Transverse colon (tissue), 4 donors: ENCODE measurements at regions of chr1 and their contacts with region 1.

Region 1: GRCh38 chr1:229625915-229626831 is at the starts of genes TAF5L and URB2:
- DNase-seq: peak; percentile 90
- H3K4me3 ChIP-seq: peak within 1 kb of the TSS; percentile 74 to 99 (median 88)
- H3K27ac ChIP-seq: peak within 1 kb of the TSS; percentile 89 to 96 (median 94)
- H3K4me1 ChIP-seq: peaks cover 14 to 32% (median 18%) of the 10 kb centered on the region in 4 donors
- H3K27me3 ChIP-seq: no peaks in the 10 kb centered on the region
- CTCF ChIP-seq: no peak
- EP300 ChIP-seq: no peak
- POLR2A ChIP-seq: peak; percentile 50
- total RNA-seq, gene TAF5L: 10.7 to 22.1 (median 15.4) TPM
- total RNA-seq, gene URB2: 2.6 to 6.5 (median 3.2) TPM

Region 2: GRCh38 chr1:229558571-229559335 is 67.4 kb before region 1 on chr1 and contains the start of gene ABCB10:
- in situ Hi-C with region 1: loop called in 2 of 4 experiments (anchors 10 kb)
- intact Hi-C with region 1: loop called (anchors 5 kb)
- DNase-seq: peak; percentile 96
- H3K4me3 ChIP-seq: peak within 1 kb of the TSS; percentile 71 to 96 (median 86)
- H3K27ac ChIP-seq: peak within 1 kb of the TSS; percentile 93 to 99 (median 98)
- H3K4me1 ChIP-seq: peaks cover 10 to 34% (median 23%) of the 10 kb centered on the region in 4 donors
- H3K27me3 ChIP-seq: no peaks in the 10 kb centered on the region
- CTCF ChIP-seq: peak; percentile 63 to 89 (median 71)
- EP300 ChIP-seq: no peak
- POLR2A ChIP-seq: peak; percentile 56
- total RNA-seq, gene ABCB10: 4.5 to 22.5 (median 18.9) TPM

Region 3: DNA sequence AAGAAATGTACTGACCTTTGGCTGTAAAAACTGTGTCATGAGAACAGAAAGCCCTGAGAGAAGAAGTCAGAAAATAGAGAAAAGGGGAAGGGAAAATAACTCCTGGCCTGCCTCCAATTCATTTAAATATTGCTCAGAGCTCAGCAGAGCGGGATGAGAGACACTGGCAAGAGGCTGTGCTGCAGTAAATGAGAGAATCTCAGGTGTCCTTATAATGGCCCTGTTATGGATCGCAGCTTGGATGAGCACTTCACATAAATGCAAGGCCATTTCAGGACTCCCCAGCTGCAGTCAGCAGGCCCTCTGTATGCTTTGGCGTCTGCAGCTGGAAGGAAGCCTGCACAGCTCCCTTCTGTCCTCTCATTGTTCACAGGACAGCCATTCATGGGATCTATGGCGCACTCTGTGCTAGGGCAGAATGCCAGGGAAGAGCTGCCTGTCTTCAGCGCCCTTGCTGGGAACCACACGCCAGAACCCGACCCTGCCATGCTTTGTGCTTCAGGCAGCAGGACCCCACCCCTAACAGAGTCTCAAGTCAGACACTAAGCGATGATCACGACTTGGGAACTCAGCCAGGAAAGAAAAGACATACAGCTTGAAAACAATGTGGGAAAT is 47.0 kb before region 1 on chr1:
- in situ Hi-C with region 1: loop called in 1 of 4 experiments (anchors 10 kb)
- intact Hi-C with region 1: no loop called
- DNase-seq: no peak
- H3K4me3 ChIP-seq: peak overlapping the region in 3 of 4 donors; percentile 2 to 12 (median 3)
- H3K27ac ChIP-seq: peak overlapping the region; percentile 28 to 65 (median 52)
- H3K4me1 ChIP-seq: peaks cover 11 to 20% (median 16%) of the 10 kb centered on the region in 4 donors
- H3K27me3 ChIP-seq: no peaks in the 10 kb centered on the region
- CTCF ChIP-seq: no peak
- EP300 ChIP-seq: no peak
- POLR2A ChIP-seq: no peak

Region 4: GRCh38 chr1:230066466-230067404 is 440.6 kb after region 1 on chr1 and contains the start of gene GALNT2:
- in situ Hi-C with region 1: no loop called
- intact Hi-C with region 1: no loop called
- DNase-seq: peak; percentile 93
- H3K4me3 ChIP-seq: peak within 1 kb of the TSS; percentile 71 to 96 (median 88)
- H3K27ac ChIP-seq: peak within 1 kb of the TSS; percentile 92 to 96 (median 96)
- H3K4me1 ChIP-seq: peaks cover 0 to 29% (median 18%) of the 10 kb centered on the region in 4 donors
- H3K27me3 ChIP-seq: no peaks in the 10 kb centered on the region
- CTCF ChIP-seq: no peak
- EP300 ChIP-seq: no peak
- POLR2A ChIP-seq: peak; percentile 38
- total RNA-seq, gene GALNT2: 16.5 to 48.8 (median 36.8) TPM